ENCODE measurements at regions of chr17 and their contacts with region 1.

Region 1: DNA sequence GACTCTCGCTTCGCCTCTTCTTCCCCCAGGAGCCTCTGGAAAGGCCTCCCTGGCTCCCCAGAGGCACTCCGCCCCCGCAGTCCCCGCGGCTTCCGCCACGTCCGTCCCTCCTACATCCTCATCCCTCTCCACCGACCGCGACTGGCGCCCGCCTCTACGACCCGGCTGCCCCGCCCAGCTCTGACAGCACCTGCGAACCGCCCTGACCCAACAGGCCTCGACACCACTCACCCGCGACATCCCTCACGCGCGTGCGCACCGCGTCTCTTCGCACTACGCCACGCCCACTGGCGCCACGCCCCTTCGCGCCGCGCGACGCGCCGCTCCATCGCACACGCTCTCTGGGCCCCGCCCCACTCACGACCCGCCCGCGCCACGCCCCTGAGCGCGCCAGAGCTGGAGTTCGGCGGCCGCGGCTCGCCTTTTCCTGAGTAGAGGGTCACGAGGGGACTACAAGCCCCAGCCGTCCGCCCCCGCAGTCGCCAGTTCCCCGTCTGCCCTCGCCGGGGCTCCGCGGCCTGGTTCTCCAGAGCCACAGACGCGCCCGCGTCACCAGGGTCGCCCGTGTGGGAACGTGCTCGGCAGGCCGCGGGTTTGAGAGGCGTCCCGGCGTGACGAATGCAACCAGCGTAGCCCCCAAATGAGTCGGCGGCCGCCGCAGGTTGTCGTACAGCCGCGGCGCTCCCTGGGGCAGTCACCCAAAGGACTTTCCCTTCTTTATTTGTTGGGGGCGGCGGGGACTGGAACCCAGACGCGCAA is 56.2 kb upstream of the LRRC37A3 start:
- DNase-seq: peak; percentile 93
- H3K4me3 Mint-ChIP-seq: peak overlapping the region; percentile 100
- H3K27ac Mint-ChIP-seq: peak overlapping the region; percentile 99
- H3K4me1 Mint-ChIP-seq: peaks cover 21% of the 10 kb centered on the region
- H3K27me3 Mint-ChIP-seq: no peaks in the 10 kb centered on the region
- CTCF ChIP-seq: no peak

Region 2: DNA sequence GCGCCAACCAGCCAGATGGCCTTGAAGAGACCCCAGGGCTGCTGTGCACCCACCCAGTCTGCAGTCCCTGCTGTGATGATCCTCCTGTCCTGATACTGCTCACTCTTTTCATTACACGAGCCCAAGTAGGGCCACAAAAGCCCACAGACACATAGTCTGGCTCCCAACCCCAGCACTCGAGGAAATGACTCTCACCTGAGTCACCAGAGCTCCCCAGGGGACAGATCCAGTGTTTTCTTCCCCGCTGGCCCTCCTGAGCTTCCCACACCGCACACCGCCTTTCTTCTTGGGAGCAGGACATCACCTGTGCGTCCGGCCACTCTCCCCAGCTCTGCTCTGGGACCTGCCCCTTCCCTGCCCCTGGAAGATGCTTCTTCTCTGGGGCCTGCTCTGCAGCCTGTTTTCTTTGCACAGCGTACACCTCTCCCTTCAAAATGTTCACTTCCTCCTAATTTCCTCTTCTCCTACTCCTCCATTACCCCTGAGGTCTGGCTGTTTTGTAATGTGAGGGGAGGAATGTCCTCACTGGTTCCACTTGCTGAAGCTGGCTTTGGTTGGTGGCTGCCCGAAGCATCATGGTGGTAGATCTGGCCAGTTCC is 1000.8 kb before region 1 on chr17:
- CTCF ChIA-PET with region 1: no interaction called
- POLR2A ChIA-PET with region 1: no interaction called
- intact Hi-C with region 1: no loop called
- DNase-seq: peak; percentile 48
- H3K4me3 Mint-ChIP-seq: peak overlapping the region; percentile 9
- H3K27ac Mint-ChIP-seq: no peak overlapping the region
- H3K4me1 Mint-ChIP-seq: peaks cover 20% of the 10 kb centered on the region
- H3K27me3 Mint-ChIP-seq: no peaks in the 10 kb centered on the region
- CTCF ChIP-seq: no peak

Region 3: DNA sequence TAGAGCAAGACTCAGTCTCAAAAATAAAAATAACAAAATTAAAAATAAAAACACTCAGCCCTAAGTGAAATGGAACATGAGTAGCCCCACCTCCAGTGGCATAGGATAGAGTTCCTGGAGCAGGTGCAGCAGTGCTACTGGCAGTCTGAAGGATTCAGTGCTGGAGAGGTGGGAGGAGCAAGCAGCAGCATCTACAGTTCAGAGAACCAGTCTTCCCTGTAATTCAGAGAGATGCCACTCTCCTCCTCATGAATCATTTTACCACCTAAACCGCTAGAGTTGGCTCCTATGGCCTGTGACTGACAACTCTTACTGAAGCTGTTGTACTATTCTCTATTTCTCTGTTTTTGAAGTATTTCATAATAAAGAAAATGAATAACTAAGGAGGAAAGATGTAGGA is 257.4 kb before region 1 on chr17:
- CTCF ChIA-PET with region 1: no interaction called
- POLR2A ChIA-PET with region 1: no interaction called
- intact Hi-C with region 1: no loop called
- DNase-seq: no peak
- H3K4me3 Mint-ChIP-seq: no peak overlapping the region
- H3K27ac Mint-ChIP-seq: no peak overlapping the region
- H3K4me1 Mint-ChIP-seq: peaks cover 8% of the 10 kb centered on the region
- H3K27me3 Mint-ChIP-seq: no peaks in the 10 kb centered on the region
- CTCF ChIP-seq: no peak

Region 4: DNA sequence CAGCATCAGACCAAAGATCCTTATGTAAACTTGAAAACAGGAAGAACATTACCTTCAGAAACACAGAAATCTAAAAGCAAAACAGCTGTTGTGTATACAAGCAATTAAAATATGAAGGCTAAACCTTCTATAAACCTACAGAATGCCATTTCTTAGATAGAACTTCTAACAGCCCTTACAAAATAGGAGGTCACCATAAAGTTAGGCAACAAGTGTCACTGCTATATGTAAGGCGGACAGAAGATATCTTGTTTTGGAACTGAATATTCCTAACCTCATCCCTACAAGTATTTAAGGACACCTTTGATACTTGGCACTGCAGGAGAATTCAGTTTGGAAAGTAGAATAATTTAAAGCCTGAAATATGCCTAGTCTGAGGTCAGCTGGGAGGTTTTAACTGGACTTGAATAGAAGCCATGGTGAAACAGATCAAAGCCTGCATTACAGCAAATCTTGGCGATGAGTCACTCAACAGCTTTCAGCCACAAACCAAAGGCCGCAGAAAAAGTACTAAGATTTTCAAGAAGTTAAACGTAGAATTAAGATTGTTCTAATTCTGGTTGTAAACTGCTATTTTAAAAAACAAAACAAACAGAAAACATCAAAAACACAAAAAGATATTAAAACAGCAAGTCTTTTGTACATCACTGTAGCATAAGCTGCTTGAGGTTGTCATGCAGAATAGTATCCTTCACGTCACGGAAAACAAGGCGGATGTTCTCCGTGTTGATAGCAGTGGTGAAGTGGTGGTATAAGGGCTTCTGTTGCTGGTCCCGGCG is 38.3 kb after region 1 on chr17:
- CTCF ChIA-PET with region 1: no interaction called
- POLR2A ChIA-PET with region 1: interaction called, 74 read pairs
- intact Hi-C with region 1: no loop called
- DNase-seq: peak; percentile 76
- H3K4me3 Mint-ChIP-seq: no peak overlapping the region
- H3K27ac Mint-ChIP-seq: peak overlapping the region; percentile 23
- H3K4me1 Mint-ChIP-seq: peaks cover 31% of the 10 kb centered on the region
- H3K27me3 Mint-ChIP-seq: no peaks in the 10 kb centered on the region
- CTCF ChIP-seq: no peak

Region 5: GRCh38 chr17:65039336-65039988 is 64.0 kb after region 1 on chr17:
- CTCF ChIA-PET with region 1: interaction called, 3 read pairs
- POLR2A ChIA-PET with region 1: interaction called, 16 read pairs
- intact Hi-C with region 1: no loop called
- DNase-seq: peak; percentile 52
- H3K4me3 Mint-ChIP-seq: peak overlapping the region; percentile 49
- H3K27ac Mint-ChIP-seq: peak overlapping the region; percentile 46
- H3K4me1 Mint-ChIP-seq: peaks cover 40% of the 10 kb centered on the region
- H3K27me3 Mint-ChIP-seq: no peaks in the 10 kb centered on the region
- CTCF ChIP-seq: no peak

Region 6: DNA sequence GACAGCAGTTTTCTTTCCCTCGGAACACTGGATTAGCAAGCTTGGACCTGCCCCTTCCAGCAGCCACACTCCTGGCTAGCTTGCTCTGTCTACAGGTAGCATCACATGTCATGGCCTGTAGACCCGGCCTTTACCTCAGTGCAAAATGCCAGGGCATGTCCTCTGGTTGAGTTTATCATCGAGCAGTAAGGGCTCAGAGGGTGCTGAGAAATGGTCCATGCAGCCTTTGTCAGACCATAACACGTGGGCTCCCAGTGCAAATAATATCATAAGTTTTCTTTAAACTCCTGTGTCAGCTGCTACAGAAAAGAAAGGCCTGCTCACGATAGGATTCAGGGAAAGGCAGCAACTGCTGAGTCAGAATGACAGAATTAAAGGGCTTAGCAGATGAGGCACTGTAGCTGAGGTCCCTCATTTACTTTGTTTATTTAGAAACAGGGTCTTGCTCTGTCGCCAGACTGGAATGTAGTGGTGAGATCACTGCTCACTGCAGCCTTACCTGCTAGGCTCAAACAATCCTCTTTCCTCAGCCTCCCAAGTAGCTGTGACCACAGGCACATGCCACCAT is 89.0 kb after region 1 on chr17:
- CTCF ChIA-PET with region 1: no interaction called
- POLR2A ChIA-PET with region 1: interaction called, 103 read pairs
- intact Hi-C with region 1: no loop called
- DNase-seq: peak; percentile 80
- H3K4me3 Mint-ChIP-seq: no peak overlapping the region
- H3K27ac Mint-ChIP-seq: peak overlapping the region; percentile 79
- H3K4me1 Mint-ChIP-seq: peaks cover 20% of the 10 kb centered on the region
- H3K27me3 Mint-ChIP-seq: no peaks in the 10 kb centered on the region
- CTCF ChIP-seq: no peak

Measured in MCF 10A (cell line).